ENCODE measurements at regions of chr16 and their contacts with region 1.

Region 1: DNA sequence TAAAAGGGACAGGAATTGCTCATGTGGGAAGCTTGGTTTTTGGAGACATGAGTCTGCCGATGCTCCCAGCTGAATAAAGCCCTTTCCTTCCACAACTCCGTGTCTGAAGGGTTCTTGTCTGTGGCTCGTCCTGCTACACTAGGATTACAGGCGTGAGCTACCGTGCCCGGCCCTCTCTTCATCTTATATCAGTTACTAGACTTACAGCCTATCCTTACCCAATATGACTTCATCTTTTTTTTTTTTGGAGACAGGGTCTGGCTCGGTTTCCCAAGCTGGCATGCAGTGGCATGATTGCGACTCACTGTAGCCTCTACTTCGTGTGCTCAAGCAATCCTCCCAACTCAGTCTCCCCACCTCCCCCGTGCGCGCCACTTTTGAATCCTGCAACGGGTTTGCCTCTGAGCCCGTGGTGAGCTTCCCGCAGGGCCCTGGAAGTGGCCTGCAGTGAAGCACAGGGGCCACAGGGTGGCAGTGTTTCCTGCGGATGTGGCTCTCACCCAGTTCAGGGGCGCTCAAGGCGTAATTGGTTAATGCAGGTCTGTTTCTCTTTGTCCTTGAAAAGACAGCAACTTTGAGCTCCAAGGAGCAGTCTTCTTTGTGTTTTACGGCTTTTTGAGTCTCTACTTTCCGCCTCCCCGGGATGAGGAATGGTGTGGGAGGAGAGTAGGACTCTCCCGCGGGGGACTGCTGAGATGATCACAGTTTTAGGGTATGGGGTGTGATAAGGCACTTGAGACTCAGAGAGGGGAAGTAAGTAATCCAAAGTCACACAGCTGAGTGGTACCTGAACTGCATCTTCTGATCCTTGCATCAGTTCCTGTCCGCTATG is 22.7 kb upstream of the GPRC5B start:
- DNase-seq: peak; percentile 59 to 85
- ATAC-seq: peak; percentile 86
- H3K4me3 ChIP-seq: no peak overlapping the region
- H3K27ac ChIP-seq: no peak overlapping the region
- H3K4me1 ChIP-seq: no peaks in the 10 kb centered on the region
- H3K27me3 ChIP-seq: no peaks in the 10 kb centered on the region

Region 2: DNA sequence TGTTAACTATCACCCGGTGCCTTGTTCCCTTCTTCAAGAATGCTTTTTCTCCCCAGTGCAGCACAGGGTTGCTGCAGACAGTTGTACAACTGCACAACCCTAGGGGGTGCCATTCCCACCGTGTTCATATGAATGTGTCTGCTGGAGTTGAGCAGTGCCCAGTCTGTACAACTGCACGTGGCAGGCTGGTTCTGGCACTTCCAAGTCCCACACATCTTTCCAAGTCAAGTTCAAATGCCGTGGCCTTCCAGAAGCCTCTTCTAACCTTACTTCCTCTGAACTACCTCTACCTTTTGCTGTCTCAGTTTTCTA is 62.2 kb after region 1 on chr16:
- intact Hi-C with region 1: no loop called
- DNase-seq: no peak
- ATAC-seq: no peak
- H3K4me3 ChIP-seq: no peak overlapping the region
- H3K27ac ChIP-seq: no peak overlapping the region
- H3K4me1 ChIP-seq: no peaks in the 10 kb centered on the region
- H3K27me3 ChIP-seq: no peaks in the 10 kb centered on the region

Region 3: DNA sequence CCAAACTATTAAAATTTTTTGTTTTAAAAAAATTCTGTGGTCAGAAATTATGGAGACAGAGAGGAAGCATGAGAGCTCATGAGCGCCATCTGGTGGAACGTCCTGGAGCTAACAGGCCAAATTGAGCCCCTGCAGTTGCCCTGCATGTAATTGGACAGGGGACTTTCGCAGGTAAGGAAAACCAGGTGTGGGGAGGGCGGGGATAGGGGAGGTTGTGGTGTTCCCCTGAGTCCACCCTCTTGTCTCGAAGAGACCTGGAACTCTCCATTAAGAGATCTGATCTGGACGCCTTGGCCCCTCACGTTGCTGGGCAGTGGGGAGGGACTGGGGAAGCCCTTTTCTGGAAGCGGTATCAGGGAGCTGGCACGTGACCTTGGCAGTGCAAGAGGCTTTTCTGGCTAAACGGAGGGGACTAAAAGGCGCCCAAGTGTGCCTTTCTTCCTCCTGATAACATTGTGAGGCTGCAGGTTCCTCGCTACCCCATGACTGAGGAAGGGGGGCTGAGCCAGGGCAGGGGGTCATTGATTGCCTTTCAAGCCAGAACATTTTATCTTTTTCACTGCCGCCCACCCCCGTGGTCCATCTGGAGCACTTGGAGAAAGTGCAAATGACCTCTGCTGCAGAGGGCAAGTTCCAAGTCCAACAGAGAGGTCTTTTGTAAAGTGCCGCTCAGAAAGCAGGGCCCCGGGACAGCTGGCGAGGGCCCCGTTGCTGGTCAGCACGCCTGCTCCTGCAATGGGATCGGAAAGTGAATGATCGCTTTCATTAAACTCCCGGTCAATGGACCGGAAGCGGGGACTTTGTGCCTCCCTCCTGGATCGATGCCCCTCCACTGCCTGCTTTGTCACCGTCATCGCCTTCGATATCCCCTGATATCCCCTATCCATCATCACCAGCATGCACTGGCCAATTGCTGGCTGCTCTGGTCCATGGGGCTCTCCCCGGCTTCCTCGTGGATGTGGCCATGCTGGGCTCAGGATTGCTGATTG is 478.8 kb after region 1 on chr16:
- intact Hi-C with region 1: loop called (anchors 5 kb)
- DNase-seq: peak; percentile 71 to 84
- ATAC-seq: no peak
- H3K4me3 ChIP-seq: no peak overlapping the region
- H3K27ac ChIP-seq: no peak overlapping the region
- H3K4me1 ChIP-seq: no peaks in the 10 kb centered on the region
- H3K27me3 ChIP-seq: no peaks in the 10 kb centered on the region

Measured in aorta (tissue), 5 donors.